ENCODE measurements at regions of chr1 and their contacts with region 1.

Region 1: DNA sequence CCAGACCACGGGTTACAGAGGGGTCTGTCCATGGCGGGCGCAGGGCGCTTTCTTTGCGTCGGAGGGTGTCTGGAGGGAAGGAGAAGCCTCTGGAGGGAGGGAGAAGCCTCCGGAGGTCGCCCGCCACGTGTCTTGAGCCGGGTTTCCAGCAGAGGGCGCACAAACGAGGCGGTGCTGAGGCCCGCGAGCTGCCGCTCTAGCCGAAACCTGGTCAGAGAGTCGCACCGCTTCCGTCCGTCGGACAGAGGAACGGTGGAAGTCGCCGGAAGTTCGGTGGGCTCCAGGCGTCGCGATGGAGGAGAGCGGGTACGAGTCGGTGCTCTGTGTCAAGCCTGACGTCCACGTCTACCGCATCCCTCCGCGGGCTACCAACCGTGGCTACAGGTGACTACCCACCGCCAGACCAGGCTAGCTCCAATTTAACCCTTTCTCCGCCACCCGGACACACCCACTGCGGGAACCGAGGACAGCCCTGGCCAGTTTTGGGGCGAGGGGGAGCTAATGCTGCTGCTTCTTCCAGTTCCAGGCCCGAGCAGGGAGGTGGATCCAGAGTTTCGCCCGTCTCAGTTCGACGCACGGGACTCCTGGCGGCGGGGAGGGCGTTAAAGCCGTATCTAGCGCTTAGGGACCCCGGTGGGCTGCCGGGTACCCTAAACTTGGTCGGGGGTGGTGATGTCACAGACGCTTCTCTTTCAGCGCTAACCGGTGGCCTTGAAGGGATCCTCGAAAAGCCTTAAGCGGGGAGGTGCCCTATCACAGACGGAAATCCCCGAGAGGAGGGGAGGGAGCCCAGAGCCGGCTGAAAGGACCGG is at the start of gene NECAP2:
- DNase-seq: peak; percentile 85
- H3K4me3 ChIP-seq: peak within 1 kb of the TSS; percentile 99
- H3K27ac ChIP-seq: peak within 1 kb of the TSS; percentile 82
- H3K27me3 ChIP-seq: no peaks in the 10 kb centered on the region
- CTCF ChIP-seq: peak; percentile 72
- polyA plus RNA-seq, gene NECAP2: 108 and 111 TPM in 2 replicates

Region 2: GRCh38 chr1:15598436-15598835 is 842.2 kb before region 1 on chr1:
- CTCF ChIA-PET with region 1: no interaction called
- POLR2A ChIA-PET with region 1: no interaction called
- DNase-seq: no peak
- H3K4me3 ChIP-seq: no peak overlapping the region
- H3K27ac ChIP-seq: no peak overlapping the region
- H3K27me3 ChIP-seq: peaks cover 2% of the 10 kb centered on the region
- CTCF ChIP-seq: no peak

Region 3: DNA sequence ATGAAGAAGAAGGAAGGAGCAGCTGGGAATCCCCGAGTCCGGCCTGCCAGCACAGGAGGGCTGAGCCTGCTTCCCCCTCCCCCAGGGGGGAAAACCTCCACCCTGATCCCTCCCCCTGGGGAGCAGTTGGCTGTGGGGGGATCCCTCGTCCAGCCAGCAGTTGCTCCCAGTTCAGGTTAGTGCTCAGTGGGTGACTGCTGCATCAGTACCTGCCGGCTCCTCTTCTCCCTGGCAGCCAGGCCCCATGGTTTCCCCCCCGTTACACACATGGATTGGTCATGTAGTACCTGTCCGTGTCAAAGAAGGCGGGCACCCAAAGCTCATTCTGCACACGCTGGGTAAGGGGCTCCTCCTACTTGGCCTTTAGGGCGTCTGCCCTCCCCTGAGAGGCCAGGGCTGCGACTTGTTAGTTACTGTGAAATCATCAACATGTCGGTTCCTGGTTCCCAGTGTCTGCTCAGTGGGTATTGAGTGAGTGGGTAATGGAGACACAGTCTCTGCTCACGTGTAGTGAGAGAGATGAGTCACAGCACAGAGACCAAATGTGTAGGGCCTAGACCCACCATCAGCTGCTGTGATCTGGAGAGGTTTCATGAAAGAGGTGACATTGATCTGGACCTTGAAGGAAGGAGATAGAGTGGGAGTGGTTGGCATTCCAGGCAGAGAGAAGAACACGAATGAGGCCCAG is 11.3 kb after region 1 on chr1:
- CTCF ChIA-PET with region 1: interaction called, 11 read pairs
- POLR2A ChIA-PET with region 1: interaction called, 5 read pairs
- DNase-seq: no peak
- H3K4me3 ChIP-seq: no peak overlapping the region
- H3K27ac ChIP-seq: no peak overlapping the region
- H3K27me3 ChIP-seq: no peaks in the 10 kb centered on the region
- CTCF ChIP-seq: no peak

Region 4: DNA sequence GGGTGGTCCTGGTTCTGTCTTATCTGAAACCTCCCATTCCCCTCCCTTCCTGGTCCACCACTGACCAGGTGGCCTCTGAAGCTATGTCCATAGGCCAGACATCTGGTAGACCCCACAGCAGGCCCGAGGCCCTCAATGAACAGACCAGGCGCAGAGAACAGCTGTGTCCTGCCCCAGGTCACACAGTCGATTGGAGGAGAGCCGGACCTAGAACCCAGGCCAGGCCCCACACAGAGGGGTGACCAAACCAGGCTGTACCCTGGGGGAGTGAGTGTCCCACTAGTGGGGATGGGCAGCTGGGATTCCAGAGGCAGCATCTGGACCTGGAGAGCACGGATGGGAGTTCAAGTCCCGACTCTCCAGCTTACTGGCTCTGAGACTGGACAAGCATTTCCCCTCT is 44.3 kb after region 1 on chr1:
- CTCF ChIA-PET with region 1: no interaction called
- POLR2A ChIA-PET with region 1: no interaction called
- DNase-seq: no peak
- H3K4me3 ChIP-seq: no peak overlapping the region
- H3K27ac ChIP-seq: no peak overlapping the region
- H3K27me3 ChIP-seq: no peaks in the 10 kb centered on the region
- CTCF ChIP-seq: no peak